ENCODE measurements at regions of chr13 and their contacts with region 1.

Region 1: DNA sequence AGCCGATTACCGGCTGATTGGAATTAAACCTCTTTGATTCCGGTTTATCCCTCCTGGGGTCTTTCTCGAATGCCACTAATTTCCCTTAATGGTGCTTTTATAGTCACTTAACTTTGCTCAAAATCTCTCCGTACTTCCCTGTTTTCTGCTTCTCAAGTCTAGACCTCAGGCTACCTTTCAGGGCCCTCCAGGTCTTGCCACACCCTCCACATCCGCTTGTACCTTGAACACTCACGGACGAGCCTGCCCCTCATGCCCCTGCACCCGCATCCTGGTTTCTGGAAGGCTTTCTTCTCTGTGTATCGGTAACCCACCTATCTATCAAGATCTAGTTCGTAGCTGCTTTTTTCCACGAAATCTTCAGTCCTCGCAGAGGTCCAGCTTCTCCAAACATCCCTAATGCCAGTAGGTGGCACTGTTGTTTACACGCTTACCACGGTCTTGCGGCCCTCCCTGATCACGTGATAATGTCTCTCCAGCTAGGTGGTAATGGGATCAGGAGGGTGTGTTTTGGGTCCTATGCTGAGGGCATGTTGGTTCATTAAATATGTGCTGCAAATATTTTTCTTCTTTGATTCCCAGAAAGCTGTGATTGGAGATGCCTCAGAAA is 13.8 kb downstream of the ATP12A start:
- DNase-seq: peak; percentile 81 to 83 (median 81)
- H3K4me3 ChIP-seq: peak overlapping the region in 3 of 7 experiments; percentile 4 to 67 (median 46)
- H3K27ac ChIP-seq: no peak overlapping the region
- H3K4me1 ChIP-seq: peaks cover 0 to 8% (median 3%) of the 10 kb centered on the region in 4 experiments
- H3K27me3 ChIP-seq: peaks cover 0 to 22% (median 12%) of the 10 kb centered on the region in 5 experiments

Region 2: DNA sequence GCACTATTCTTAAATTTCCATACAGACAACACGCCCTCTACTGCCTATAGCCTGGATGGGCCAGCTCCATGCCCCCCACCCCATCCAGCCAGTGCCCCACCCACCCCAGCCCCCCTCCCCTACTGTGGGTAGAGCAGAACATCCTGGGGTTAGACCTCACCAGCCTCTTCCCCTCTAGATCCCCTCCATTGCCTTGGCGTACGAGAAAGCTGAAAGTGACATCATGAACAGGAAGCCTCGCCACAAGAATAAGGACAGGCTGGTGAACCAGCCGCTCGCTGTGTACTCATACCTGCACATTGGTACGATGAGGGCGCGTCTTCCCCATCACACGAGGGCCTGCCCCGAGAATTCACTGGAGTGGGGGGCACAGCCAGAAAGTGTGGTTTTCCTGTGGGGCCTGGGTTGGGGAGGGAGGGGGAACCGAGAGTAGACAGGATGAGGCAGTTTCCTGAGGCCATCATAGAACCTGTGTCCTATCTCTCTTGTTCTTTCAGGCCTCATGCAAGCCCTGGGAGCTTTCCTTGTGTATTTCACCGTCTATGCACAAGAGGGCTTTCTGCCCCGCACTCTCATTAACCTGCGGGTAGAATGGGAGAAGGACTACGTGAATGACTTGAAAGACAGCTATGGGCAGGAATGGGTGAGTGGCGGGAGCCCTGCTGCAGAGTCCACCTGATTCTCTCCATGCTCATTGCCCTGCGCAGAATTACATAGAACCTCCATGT is 15.4 kb after region 1 on chr13:
- CTCF ChIA-PET with region 1: interaction called, 90 read pairs
- POLR2A ChIA-PET with region 1: interaction called, 4 read pairs
- DNase-seq: peak; percentile 93 to 99 (median 96)
- H3K4me3 ChIP-seq: peak overlapping the region in 2 of 7 experiments; percentile 26 to 34
- H3K27ac ChIP-seq: no peak overlapping the region
- H3K4me1 ChIP-seq: peaks cover 9 to 41% (median 28%) of the 10 kb centered on the region in 4 experiments
- H3K27me3 ChIP-seq: no peaks in the 10 kb centered on the region